CD8-positive, alpha-beta T cell (primary cell): ENCODE measurements at regions of chr18 and their contacts with region 1.

Region 1: DNA sequence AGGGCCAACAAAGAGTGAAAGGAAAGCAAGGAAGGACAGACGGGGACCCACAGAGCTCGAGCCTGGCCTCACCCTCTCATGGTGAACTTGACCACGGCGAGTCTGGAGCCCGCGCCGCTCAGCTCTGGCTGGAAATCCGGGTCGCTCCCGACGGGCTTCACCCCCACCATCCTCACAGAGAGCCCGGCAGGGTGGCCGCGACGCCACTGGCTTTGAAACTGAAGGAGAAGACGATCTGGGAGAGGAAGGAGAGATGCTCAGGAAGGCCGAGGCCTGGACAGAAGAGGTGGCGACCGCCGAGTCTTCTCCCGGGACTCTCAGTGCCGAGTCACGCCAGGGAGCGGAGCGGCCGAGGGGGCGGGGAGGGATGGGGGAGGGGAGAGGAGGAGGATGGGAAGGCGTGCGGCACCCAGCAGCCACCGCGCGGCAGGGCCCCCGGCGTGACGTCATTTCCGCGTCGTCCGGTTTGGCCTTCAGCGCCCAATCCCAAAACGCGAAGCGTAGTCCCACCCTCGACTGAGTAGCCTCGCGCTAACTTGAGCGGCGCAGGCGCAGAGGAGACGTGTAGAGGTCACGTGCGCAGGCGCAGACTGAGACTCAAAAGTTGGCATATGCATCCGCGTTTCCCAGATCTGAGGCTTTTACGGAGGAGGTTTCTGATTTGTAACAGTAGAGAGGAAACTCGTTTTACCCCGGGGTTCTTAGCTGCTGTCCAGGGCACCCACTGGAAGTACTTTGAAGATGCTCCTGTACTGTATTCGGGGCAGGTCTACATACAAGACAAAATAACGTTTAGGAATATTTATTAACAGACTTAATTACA is at the start of gene TXNL1:
- DNase-seq: peak; percentile 97 to 100 (median 99)
- ATAC-seq: peak; percentile 97
- H3K4me3 ChIP-seq: peak within 1 kb of the TSS; percentile 55 to 74
- H3K4me3 Mint-ChIP-seq: peak within 1 kb of the TSS; percentile 98
- H3K27ac ChIP-seq: peak within 1 kb of the TSS; percentile 85
- H3K27ac Mint-ChIP-seq: peak within 1 kb of the TSS; percentile 99
- H3K4me1 ChIP-seq: peaks cover 35% of the 10 kb centered on the region
- H3K4me1 Mint-ChIP-seq: peaks cover 51% of the 10 kb centered on the region
- H3K27me3 ChIP-seq: no peaks in the 10 kb centered on the region
- H3K27me3 Mint-ChIP-seq: no peaks in the 10 kb centered on the region
- CTCF ChIP-seq: no peak
- total RNA-seq, gene TXNL1: 43.3 to 44.8 TPM

Region 2: GRCh38 chr18:55589625-55590291 is 1048.7 kb before region 1 on chr18:
- CTCF ChIA-PET with region 1: no interaction called
- POLR2A ChIA-PET with region 1: no interaction called
- intact Hi-C with region 1: loop called (anchors 5 to 10 kb)
- DNase-seq: peak; percentile 43 to 91 (median 72)
- ATAC-seq: peak; percentile 91
- H3K4me3 ChIP-seq: peak overlapping the region; percentile 46 to 54
- H3K4me3 Mint-ChIP-seq: peak overlapping the region; percentile 90
- H3K27ac ChIP-seq: peak overlapping the region in 1 of 2 experiments; percentile 64
- H3K27ac Mint-ChIP-seq: peak overlapping the region; percentile 74
- H3K4me1 ChIP-seq: peaks cover 7% of the 10 kb centered on the region
- H3K4me1 Mint-ChIP-seq: peaks cover 26% of the 10 kb centered on the region
- H3K27me3 ChIP-seq: peaks cover 5 to 7% of the 10 kb centered on the region in 2 experiments
- H3K27me3 Mint-ChIP-seq: peaks cover 40% of the 10 kb centered on the region
- CTCF ChIP-seq: no peak

Region 3: DNA sequence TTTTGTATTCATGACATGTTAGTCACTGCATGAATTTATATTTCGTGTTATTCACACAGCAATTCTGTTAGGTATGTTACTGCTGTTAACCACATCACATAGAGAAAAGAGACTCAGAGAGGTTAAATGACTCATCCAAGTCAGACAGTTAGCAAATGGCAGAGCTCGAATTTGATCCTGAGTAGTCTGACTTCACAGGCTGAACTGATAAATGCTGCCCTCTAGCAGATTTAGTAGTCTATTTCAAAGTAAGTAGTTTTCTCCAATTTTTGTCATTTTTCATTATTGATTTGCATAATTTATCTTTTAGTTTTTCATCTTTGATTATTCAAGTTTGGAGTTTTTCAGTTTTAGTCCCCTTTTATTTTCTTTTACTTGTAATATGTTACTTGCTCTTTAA is 71.0 kb after region 1 on chr18:
- CTCF ChIA-PET with region 1: interaction called, 3 read pairs
- POLR2A ChIA-PET with region 1: no interaction called
- intact Hi-C with region 1: loop called (anchors 2 to 5 kb)
- DNase-seq: peak in 7 of 9 experiments; percentile 2 to 77 (median 34)
- ATAC-seq: peak; percentile 100
- H3K4me3 ChIP-seq: no peak overlapping the region
- H3K4me3 Mint-ChIP-seq: no peak overlapping the region
- H3K27ac ChIP-seq: no peak overlapping the region
- H3K27ac Mint-ChIP-seq: no peak overlapping the region
- H3K4me1 ChIP-seq: no peaks in the 10 kb centered on the region
- H3K4me1 Mint-ChIP-seq: peaks cover 5% of the 10 kb centered on the region
- H3K27me3 ChIP-seq: no peaks in the 10 kb centered on the region
- H3K27me3 Mint-ChIP-seq: no peaks in the 10 kb centered on the region
- CTCF ChIP-seq: peak; percentile 58

Region 4: GRCh38 chr18:57586251-57587049 is 948.0 kb after region 1 on chr18 and contains the start of gene FECH:
- CTCF ChIA-PET with region 1: no interaction called
- POLR2A ChIA-PET with region 1: no interaction called
- intact Hi-C with region 1: loop called in 1 of 2 experiments (anchors 2 kb)
- DNase-seq: peak; percentile 34 to 82 (median 66)
- ATAC-seq: peak; percentile 97
- H3K4me3 ChIP-seq: peak within 1 kb of the TSS; percentile 73 to 87
- H3K4me3 Mint-ChIP-seq: peak within 1 kb of the TSS; percentile 88
- H3K27ac ChIP-seq: peak within 1 kb of the TSS; percentile 29 to 66
- H3K27ac Mint-ChIP-seq: peak within 1 kb of the TSS; percentile 85
- H3K4me1 ChIP-seq: peaks cover 23% of the 10 kb centered on the region
- H3K4me1 Mint-ChIP-seq: peaks cover 26% of the 10 kb centered on the region
- H3K27me3 ChIP-seq: no peaks in the 10 kb centered on the region
- H3K27me3 Mint-ChIP-seq: no peaks in the 10 kb centered on the region
- CTCF ChIP-seq: no peak
- total RNA-seq, gene FECH: 10.6 to 11.3 TPM